GM12878 (cell line): ENCODE measurements at regions of chr11 and their contacts with region 1.

Region 1: DNA sequence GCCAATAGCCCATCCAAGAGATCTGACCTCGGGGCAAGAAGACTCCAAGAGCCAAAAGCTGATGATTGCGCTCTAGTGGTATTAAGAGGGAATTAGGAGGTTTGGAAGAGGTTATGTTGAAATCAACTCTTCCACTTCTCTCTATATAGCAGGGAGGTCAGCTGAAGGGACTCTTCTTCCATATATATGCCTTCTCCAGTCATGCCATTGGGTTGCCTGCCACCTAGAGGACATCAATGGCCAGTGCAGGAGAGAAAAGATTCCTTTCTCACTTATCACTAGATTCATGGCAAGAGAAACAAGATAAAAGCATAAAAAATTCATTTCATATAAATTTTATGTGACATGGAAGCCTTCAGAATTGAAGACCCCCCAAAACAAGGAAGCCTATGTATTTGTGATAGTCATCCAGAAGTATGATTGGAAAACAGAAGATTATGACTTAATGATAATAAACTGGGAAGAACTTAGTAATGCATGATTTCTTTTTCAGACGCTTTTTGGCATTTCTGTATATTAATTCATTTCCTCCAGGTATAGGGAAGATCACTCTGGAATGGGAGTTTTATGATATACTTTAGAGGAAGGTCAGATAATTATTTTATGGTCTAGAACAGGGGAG is 435.1 kb upstream of the DDI1 start:
- DNase-seq: no peak
- ATAC-seq: peak; percentile 88
- H3K4me3 ChIP-seq: no peak overlapping the region
- H3K27ac ChIP-seq: no peak overlapping the region
- H3K4me1 ChIP-seq: no peaks in the 10 kb centered on the region
- H3K27me3 ChIP-seq: no peaks in the 10 kb centered on the region
- CTCF ChIP-seq: peak; percentile 80 to 86 (median 80)
- EP300 ChIP-seq: no peak
- POLR2A ChIP-seq: no peak
- RAD21 ChIP-seq: peak; percentile 89

Region 2: GRCh38 chr11:103091801-103092524 is 509.4 kb before region 1 on chr11 and contains the start of gene DCUN1D5:
- CTCF ChIA-PET with region 1: no interaction called
- POLR2A ChIA-PET with region 1: no interaction called
- RAD21 ChIA-PET with region 1: no interaction called
- SMC1A ChIA-PET with region 1: no interaction called
- in situ Hi-C with region 1: no loop called
- intact Hi-C with region 1: loop called (anchors 10 kb)
- DNase-seq: peak; percentile 89
- ATAC-seq: peak; percentile 97
- H3K4me3 ChIP-seq: peak within 1 kb of the TSS; percentile 96
- H3K27ac ChIP-seq: peak within 1 kb of the TSS; percentile 81
- H3K4me1 ChIP-seq: no peaks in the 10 kb centered on the region
- H3K27me3 ChIP-seq: no peaks in the 10 kb centered on the region
- CTCF ChIP-seq: no peak
- EP300 ChIP-seq: peak in 1 of 2 experiments; percentile 45; a peak in 1 of 4 replicates
- POLR2A ChIP-seq: peak; percentile 92
- RAD21 ChIP-seq: no peak
- polyA plus RNA-seq, gene DCUN1D5: 20.4 to 42.8 TPM

Region 3: GRCh38 chr11:103202048-103202651 is 399.2 kb before region 1 on chr11:
- CTCF ChIA-PET with region 1: interaction called, 4 read pairs
- POLR2A ChIA-PET with region 1: no interaction called
- RAD21 ChIA-PET with region 1: no interaction called
- SMC1A ChIA-PET with region 1: no interaction called
- in situ Hi-C with region 1: no loop called
- intact Hi-C with region 1: loop called (anchors 1 kb)
- DNase-seq: no peak
- ATAC-seq: peak; percentile 46; the same call in 2 of the 3 replicates
- H3K4me3 ChIP-seq: no peak overlapping the region
- H3K27ac ChIP-seq: no peak overlapping the region
- H3K4me1 ChIP-seq: no peaks in the 10 kb centered on the region
- H3K27me3 ChIP-seq: no peaks in the 10 kb centered on the region
- CTCF ChIP-seq: peak; percentile 33 to 54 (median 45); a peak in 5 of 6 replicates
- EP300 ChIP-seq: no peak
- POLR2A ChIP-seq: no peak
- RAD21 ChIP-seq: peak; percentile 54

Region 4: DNA sequence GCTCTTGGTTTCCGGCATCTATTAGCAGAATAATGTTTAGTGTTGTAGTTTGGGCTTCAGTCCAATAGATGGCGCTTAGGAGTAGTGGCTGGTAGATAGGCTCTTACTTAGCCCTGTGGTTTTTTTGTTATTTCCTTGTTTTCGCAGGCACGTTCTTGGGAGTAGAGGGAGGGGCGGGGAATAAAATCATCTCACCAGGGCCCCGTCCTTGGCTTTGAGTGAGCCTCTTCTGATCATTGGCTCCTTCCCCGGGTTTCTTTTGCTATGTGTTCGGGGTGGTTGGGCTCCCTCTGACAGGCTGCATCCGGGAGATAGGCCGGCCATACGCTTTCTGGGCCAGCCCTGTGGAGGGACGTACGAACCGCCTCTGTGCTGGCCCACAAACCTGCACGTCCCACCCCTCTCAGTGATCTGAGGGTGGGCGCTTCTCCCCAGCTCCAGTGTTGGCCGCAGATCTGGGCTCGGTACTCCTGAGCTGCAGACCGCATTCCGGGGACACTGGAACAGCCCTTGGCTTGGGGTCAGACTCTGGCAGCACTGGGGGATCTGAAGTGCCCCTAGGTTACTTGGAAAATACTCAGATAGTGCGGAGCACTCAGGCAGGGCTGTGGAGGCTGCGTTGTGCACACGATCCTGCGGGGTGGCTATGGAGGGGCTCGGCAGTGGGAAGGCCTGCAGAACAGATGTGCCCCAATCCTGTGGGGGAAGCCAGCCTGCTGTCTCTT is 275.1 kb before region 1 on chr11:
- CTCF ChIA-PET with region 1: interaction called, 17 read pairs
- POLR2A ChIA-PET with region 1: no interaction called
- RAD21 ChIA-PET with region 1: interaction called, 3 read pairs
- SMC1A ChIA-PET with region 1: interaction called, 3 read pairs
- in situ Hi-C with region 1: loop called (anchors 5 kb)
- intact Hi-C with region 1: loop called (anchors 2 kb)
- DNase-seq: peak; percentile 17
- ATAC-seq: peak; percentile 97
- H3K4me3 ChIP-seq: no peak overlapping the region
- H3K27ac ChIP-seq: no peak overlapping the region
- H3K4me1 ChIP-seq: no peaks in the 10 kb centered on the region
- H3K27me3 ChIP-seq: no peaks in the 10 kb centered on the region
- CTCF ChIP-seq: peak; percentile 76 to 81 (median 81)
- EP300 ChIP-seq: no peak
- POLR2A ChIP-seq: no peak
- RAD21 ChIP-seq: peak; percentile 73

Region 5: DNA sequence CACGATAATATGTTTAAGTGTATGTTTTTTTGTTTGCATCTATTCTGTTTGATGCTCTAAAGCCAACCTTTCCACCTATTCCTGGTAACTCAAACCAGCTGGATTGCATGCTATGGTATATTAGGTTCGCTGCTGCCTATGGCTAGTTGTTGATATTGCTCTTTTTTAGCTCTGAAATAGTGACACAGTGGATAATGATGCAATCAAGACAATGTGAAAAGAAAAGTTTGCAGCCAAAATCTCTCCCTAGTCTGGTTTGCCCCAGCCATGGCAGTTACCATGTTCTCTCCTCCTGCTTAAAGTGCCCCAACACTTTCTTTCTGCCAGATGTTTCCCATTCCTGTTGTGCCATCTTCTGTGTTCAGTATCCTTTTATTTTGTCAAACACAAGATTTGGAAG is 222.4 kb before region 1 on chr11:
- CTCF ChIA-PET with region 1: no interaction called
- POLR2A ChIA-PET with region 1: no interaction called
- RAD21 ChIA-PET with region 1: no interaction called
- SMC1A ChIA-PET with region 1: no interaction called
- in situ Hi-C with region 1: no loop called
- intact Hi-C with region 1: no loop called
- DNase-seq: no peak
- ATAC-seq: no peak
- H3K4me3 ChIP-seq: no peak overlapping the region
- H3K27ac ChIP-seq: no peak overlapping the region
- H3K4me1 ChIP-seq: no peaks in the 10 kb centered on the region
- H3K27me3 ChIP-seq: no peaks in the 10 kb centered on the region
- CTCF ChIP-seq: no peak
- EP300 ChIP-seq: no peak
- POLR2A ChIP-seq: no peak
- RAD21 ChIP-seq: no peak

Region 6: DNA sequence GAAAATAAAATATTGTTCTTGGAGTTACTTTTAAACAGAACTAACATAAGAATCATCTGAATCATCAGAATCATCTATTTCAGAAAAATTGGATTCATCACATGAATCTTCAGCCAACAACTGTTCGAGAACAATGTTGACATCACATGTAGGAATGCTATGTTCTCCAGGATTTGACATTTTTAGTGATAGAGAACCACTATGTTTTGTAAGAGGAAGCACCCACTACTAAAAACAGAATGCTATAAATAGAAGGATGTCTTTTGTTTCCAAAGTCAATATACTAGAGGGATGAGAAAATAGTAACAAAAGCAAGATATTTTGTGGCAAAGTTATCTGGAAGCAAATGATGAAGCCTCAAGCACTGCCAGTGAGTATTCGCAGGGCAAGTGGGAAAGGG is 171.7 kb after region 1 on chr11:
- CTCF ChIA-PET with region 1: no interaction called
- POLR2A ChIA-PET with region 1: no interaction called
- RAD21 ChIA-PET with region 1: no interaction called
- SMC1A ChIA-PET with region 1: no interaction called
- in situ Hi-C with region 1: no loop called
- intact Hi-C with region 1: no loop called
- DNase-seq: no peak
- ATAC-seq: no peak
- H3K4me3 ChIP-seq: no peak overlapping the region
- H3K27ac ChIP-seq: no peak overlapping the region
- H3K4me1 ChIP-seq: no peaks in the 10 kb centered on the region
- H3K27me3 ChIP-seq: no peaks in the 10 kb centered on the region
- CTCF ChIP-seq: no peak
- EP300 ChIP-seq: no peak
- POLR2A ChIP-seq: no peak
- RAD21 ChIP-seq: no peak